CD4-positive, alpha-beta T cell (primary cell): ENCODE measurements at regions of chr7 and their contacts with region 1.

Region 1: DNA sequence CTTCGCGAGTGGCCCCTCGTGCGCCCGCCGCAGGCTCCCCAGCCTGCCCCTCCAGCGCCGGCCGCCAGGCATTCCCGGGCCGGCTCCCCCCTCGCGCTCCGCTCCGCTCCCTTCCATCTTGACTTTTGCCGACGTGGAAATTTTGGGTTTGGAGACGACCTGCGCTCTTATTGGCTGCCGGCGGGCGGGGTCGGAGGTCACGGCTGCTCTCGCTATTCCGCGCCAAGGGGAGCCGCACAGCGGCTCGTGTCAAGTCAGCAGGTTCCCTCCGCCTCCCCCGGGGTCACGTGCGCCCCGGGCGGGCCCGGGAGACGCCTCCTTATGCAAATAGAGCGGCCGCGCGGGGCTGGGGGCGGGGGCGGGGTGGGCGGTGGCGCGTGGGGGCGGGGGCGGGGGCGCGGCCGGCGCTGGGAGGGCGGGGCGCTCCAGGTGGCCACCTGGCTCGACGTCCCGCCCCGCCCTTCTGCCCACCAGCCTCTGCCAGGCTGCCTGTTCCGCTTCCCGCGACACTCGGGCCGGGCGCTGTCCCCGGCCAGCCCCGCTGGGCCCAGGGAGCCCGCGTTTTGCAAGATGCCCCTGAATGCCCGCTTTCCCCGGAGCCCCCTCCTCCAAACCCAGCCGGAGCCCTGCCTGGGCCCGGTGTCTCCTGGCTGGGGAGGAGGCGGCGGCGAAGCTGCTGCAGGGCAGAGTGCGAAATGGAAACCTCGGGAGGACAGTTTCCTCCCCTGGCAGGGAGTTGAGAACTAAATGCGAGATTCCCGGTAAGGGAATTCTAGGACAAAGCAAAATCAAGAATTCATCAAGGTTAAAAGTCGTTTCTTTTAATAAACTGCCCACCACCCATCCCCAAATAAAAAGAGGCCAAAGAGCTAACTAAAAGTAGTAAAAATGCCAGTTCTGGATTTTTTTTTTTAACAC is 200.7 kb upstream of the NFE2L3 start:
- DNase-seq: peak; percentile 77 to 96 (median 88)
- ATAC-seq: peak; percentile 98
- H3K4me3 ChIP-seq: peak overlapping the region; percentile 64
- H3K4me3 Mint-ChIP-seq: peak overlapping the region; percentile 96
- H3K27ac ChIP-seq: no peak overlapping the region
- H3K27ac Mint-ChIP-seq: peak overlapping the region; percentile 69
- H3K4me1 ChIP-seq: peaks cover 19% of the 10 kb centered on the region
- H3K4me1 Mint-ChIP-seq: peaks cover 30% of the 10 kb centered on the region
- H3K27me3 ChIP-seq: no peaks in the 10 kb centered on the region
- H3K27me3 Mint-ChIP-seq: no peaks in the 10 kb centered on the region
- CTCF ChIP-seq: no peak

Region 2: GRCh38 chr7:24566274-24566673 is 1385.0 kb before region 1 on chr7:
- CTCF ChIA-PET with region 1: no interaction called
- POLR2A ChIA-PET with region 1: no interaction called
- intact Hi-C with region 1: loop called in 1 of 2 experiments (anchors 5 kb)
- DNase-seq: no peak
- ATAC-seq: no peak
- H3K4me3 ChIP-seq: no peak overlapping the region
- H3K4me3 Mint-ChIP-seq: no peak overlapping the region
- H3K27ac ChIP-seq: no peak overlapping the region
- H3K27ac Mint-ChIP-seq: no peak overlapping the region
- H3K4me1 ChIP-seq: peaks cover under 1% of the 10 kb centered on the region
- H3K4me1 Mint-ChIP-seq: peaks cover 7% of the 10 kb centered on the region
- H3K27me3 ChIP-seq: no peaks in the 10 kb centered on the region
- H3K27me3 Mint-ChIP-seq: no peaks in the 10 kb centered on the region
- CTCF ChIP-seq: no peak

Region 3: GRCh38 chr7:25179771-25180591 is 771.3 kb before region 1 on chr7:
- CTCF ChIA-PET with region 1: no interaction called
- POLR2A ChIA-PET with region 1: no interaction called
- intact Hi-C with region 1: loop called in 1 of 2 experiments (anchors 5 kb)
- DNase-seq: peak; percentile 89 to 98 (median 95)
- ATAC-seq: peak; percentile 96
- H3K4me3 ChIP-seq: peak overlapping the region; percentile 77
- H3K4me3 Mint-ChIP-seq: peak overlapping the region; percentile 92
- H3K27ac ChIP-seq: peak overlapping the region; percentile 56 to 68
- H3K27ac Mint-ChIP-seq: peak overlapping the region; percentile 80
- H3K4me1 ChIP-seq: peaks cover 18% of the 10 kb centered on the region
- H3K4me1 Mint-ChIP-seq: peaks cover 24% of the 10 kb centered on the region
- H3K27me3 ChIP-seq: no peaks in the 10 kb centered on the region
- H3K27me3 Mint-ChIP-seq: no peaks in the 10 kb centered on the region
- CTCF ChIP-seq: peak; percentile 90

Region 4: DNA sequence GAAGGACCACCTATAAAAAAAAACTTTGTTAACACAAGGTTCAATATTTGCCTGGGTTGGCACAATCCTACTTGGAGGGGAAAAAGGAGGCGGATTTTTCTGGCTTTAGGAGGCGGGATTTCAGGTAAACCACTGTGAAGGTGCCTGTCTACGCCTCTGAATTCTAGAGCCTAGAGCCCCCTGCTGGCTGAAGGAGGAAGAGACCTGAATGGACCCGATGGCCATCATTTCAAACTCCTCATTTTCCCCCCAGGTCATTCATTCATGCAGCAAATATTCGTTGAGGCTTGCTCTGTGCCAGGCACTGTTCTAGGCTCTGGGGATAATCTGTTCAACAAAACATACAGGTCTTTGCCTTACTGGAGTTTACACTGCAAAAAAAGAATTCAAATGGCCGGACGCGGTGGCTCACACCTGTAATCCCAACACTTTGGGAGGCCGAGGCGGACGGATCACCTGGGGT is 110.4 kb after region 1 on chr7:
- CTCF ChIA-PET with region 1: no interaction called
- POLR2A ChIA-PET with region 1: no interaction called
- intact Hi-C with region 1: loop called in 1 of 2 experiments (anchors 5 kb)
- DNase-seq: peak; percentile 50 to 82 (median 64)
- ATAC-seq: peak; percentile 86
- H3K4me3 ChIP-seq: no peak overlapping the region
- H3K4me3 Mint-ChIP-seq: no peak overlapping the region
- H3K27ac ChIP-seq: no peak overlapping the region
- H3K27ac Mint-ChIP-seq: no peak overlapping the region
- H3K4me1 ChIP-seq: peaks cover 5% of the 10 kb centered on the region
- H3K4me1 Mint-ChIP-seq: peaks cover 5% of the 10 kb centered on the region
- H3K27me3 ChIP-seq: peaks cover 0 to 12% of the 10 kb centered on the region in 2 experiments
- H3K27me3 Mint-ChIP-seq: peaks cover 28% of the 10 kb centered on the region
- CTCF ChIP-seq: peak; percentile 87

Region 5: GRCh38 chr7:26284995-26285632 is 333.8 kb after region 1 on chr7:
- CTCF ChIA-PET with region 1: no interaction called
- POLR2A ChIA-PET with region 1: no interaction called
- intact Hi-C with region 1: loop called in 1 of 2 experiments (anchors 5 kb)
- DNase-seq: peak in 3 of 14 experiments; percentile 38 to 52 (median 47)
- ATAC-seq: peak; percentile 98
- H3K4me3 ChIP-seq: no peak overlapping the region
- H3K4me3 Mint-ChIP-seq: no peak overlapping the region
- H3K27ac ChIP-seq: no peak overlapping the region
- H3K27ac Mint-ChIP-seq: no peak overlapping the region
- H3K4me1 ChIP-seq: peaks cover under 1% of the 10 kb centered on the region
- H3K4me1 Mint-ChIP-seq: peaks cover 6% of the 10 kb centered on the region
- H3K27me3 ChIP-seq: no peaks in the 10 kb centered on the region
- H3K27me3 Mint-ChIP-seq: no peaks in the 10 kb centered on the region
- CTCF ChIP-seq: peak; percentile 12

Region 6: GRCh38 chr7:27179503-27180430 is 1228.5 kb after region 1 on chr7:
- CTCF ChIA-PET with region 1: no interaction called
- POLR2A ChIA-PET with region 1: no interaction called
- intact Hi-C with region 1: loop called in 1 of 2 experiments (anchors 5 kb)
- DNase-seq: peak in 11 of 14 experiments; percentile 41 to 85 (median 56)
- ATAC-seq: peak; percentile 78
- H3K4me3 ChIP-seq: no peak overlapping the region
- H3K4me3 Mint-ChIP-seq: peak overlapping the region; percentile 57
- H3K27ac ChIP-seq: no peak overlapping the region
- H3K27ac Mint-ChIP-seq: no peak overlapping the region
- H3K4me1 ChIP-seq: peaks cover 28% of the 10 kb centered on the region
- H3K4me1 Mint-ChIP-seq: peaks cover 18% of the 10 kb centered on the region
- H3K27me3 ChIP-seq: peaks cover 73 to 90% of the 10 kb centered on the region in 2 experiments
- H3K27me3 Mint-ChIP-seq: peaks cover 96% of the 10 kb centered on the region
- CTCF ChIP-seq: peak; percentile 90